ENCODE measurements at regions of chr17 and their contacts with region 1.

Region 1: DNA sequence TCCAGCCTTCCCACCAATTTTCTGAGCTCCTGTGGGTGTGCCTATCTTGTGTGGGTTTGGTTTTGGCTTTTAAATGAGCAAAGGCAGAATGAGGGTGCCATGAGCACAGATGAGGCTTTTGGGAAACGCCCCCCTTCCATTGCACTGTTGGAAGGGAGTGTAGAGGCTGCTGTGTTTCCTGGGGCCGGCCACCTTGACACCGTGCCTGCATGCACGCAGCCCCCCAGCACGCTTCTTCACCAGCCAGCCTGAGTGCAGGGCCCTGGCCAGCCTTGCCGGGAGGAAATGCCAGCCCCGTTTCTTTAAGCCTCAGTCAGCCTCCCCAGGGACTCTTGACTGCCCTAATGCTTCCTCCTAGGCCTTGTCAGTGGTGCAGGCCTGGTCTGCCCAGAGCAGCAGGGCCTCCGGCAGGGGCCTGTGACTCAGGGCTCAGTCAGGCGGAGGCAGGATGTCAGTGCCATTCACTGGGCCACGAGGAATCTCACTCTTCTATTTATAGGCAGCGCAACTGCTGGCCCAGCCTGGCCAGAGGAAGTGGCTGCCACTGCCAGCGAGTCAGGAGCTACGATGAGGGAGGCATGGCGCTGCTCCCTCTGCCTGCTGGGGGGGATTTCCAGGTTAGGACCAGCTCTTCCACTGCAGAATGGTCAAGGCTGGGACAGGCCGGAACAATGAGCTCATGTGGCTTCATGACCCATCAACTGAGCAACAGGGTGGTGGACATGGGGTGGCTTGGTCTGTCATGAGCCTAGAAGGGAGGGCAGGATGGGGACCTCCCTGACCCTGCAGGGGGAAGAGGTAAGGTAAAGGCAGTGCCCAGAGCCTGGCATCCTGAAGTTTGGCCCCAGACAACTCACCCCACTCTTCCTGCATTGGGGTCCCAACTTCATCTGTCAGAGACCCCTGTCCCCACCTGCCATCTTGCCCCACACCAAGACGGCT is 205.2 kb downstream of the RAB11FIP4 start:
- DNase-seq: no peak
- H3K4me3 ChIP-seq: no peak overlapping the region
- H3K27ac ChIP-seq: peak overlapping the region; percentile 68 to 77 (median 74)
- H3K4me1 ChIP-seq: peaks cover 15 to 30% (median 25%) of the 10 kb centered on the region in 4 donors
- H3K27me3 ChIP-seq: no peaks in the 10 kb centered on the region
- CTCF ChIP-seq: peak in 1 of 3 experiments; percentile 29
- EP300 ChIP-seq: no peak
- POLR2A ChIP-seq: no peak

Region 2: DNA sequence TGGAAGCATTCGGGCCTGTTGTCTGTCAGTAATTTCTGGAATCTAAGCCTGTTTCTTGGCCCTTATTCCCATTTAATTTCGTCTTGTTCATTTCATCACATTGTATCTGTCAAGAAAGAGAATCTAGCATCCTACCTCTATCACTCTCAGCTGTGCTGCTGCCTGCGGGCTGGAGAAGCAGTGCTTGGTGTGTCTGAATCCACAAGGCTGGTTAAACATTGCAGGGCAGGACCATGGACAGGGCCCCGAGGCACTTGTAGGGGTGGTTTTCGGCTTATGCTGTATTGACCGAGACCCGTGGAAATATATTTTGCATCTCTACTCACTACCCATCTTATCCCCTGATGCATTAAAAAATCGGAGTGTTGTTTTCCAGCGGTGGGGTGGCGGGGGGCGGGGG is 202.1 kb before region 1 on chr17:
- intact Hi-C with region 1: no loop called
- DNase-seq: no peak
- H3K4me3 ChIP-seq: no peak overlapping the region
- H3K27ac ChIP-seq: no peak overlapping the region
- H3K4me1 ChIP-seq: peaks cover 11 to 20% (median 16%) of the 10 kb centered on the region in 4 donors
- H3K27me3 ChIP-seq: peaks cover 3 to 84% (median 26%) of the 10 kb centered on the region in 4 donors
- CTCF ChIP-seq: no peak
- EP300 ChIP-seq: no peak
- POLR2A ChIP-seq: no peak

Region 3: GRCh38 chr17:31564883-31565301 is 31.8 kb before region 1 on chr17:
- intact Hi-C with region 1: loop called (anchors 2 kb)
- DNase-seq: no peak
- H3K4me3 ChIP-seq: peak overlapping the region in 1 of 4 donors; percentile 20
- H3K27ac ChIP-seq: peak overlapping the region; percentile 79 to 87 (median 83)
- H3K4me1 ChIP-seq: peaks cover 73 to 100% (median 96%) of the 10 kb centered on the region in 4 donors
- H3K27me3 ChIP-seq: no peaks in the 10 kb centered on the region
- CTCF ChIP-seq: no peak
- EP300 ChIP-seq: no peak
- POLR2A ChIP-seq: no peak

Measured in esophagus muscularis mucosa (tissue), 4 donors.